ENCODE measurements at regions of chr16 and their contacts with region 1.

Region 1: GRCh38 chr16:53945996-53946395 is 242.0 kb downstream of the FTO start:
- DNase-seq: peak; percentile 64
- ATAC-seq: peak; percentile 74
- H3K4me3 ChIP-seq: no peak overlapping the region
- H3K27ac ChIP-seq: no peak overlapping the region
- H3K4me1 ChIP-seq: peaks cover 2% of the 10 kb centered on the region; the same call in 1 of the 2 replicates
- H3K27me3 ChIP-seq: no peaks in the 10 kb centered on the region
- CTCF ChIP-seq: peak; percentile 89
- POLR2A ChIP-seq: no peak
- RAD21 ChIP-seq: peak; percentile 90

Region 2: GRCh38 chr16:53549970-53550690 is 395.9 kb before region 1 on chr16:
- CTCF ChIA-PET with region 1: no interaction called
- POLR2A ChIA-PET with region 1: no interaction called
- dilution Hi-C with region 1: no loop called
- in situ Hi-C with region 1: no loop called
- intact Hi-C with region 1: loop called (anchors 5 kb)
- DNase-seq: peak; percentile 82
- ATAC-seq: peak; percentile 95
- H3K4me3 ChIP-seq: no peak overlapping the region
- H3K27ac ChIP-seq: no peak overlapping the region
- H3K4me1 ChIP-seq: no peaks in the 10 kb centered on the region; the same call in 1 of the 2 replicates
- H3K27me3 ChIP-seq: peaks cover 46% of the 10 kb centered on the region
- CTCF ChIP-seq: peak; percentile 92
- POLR2A ChIP-seq: 0 out of 2 replicates have a peak, but pooled peaks have one; percentile 33
- RAD21 ChIP-seq: peak; percentile 92

Region 3: DNA sequence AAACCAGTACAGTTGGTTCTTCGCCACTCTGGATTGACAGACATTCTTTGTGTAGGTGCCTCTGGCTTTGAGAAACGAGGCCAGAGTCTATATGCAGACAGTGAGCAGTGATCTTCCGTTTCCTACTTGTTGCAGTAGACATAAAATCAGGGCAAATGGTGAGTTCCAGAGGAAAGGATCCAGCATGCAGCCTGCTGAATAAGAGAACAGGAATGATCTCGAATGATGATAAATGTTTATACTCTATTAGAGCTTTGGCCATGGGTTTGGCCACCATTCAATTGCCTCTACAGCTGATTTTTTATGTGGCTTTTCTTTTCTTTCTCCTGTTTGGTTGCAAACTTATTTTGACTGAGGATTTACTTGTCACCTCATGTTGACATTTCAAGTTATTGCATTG is 53.8 kb after region 1 on chr16:
- CTCF ChIA-PET with region 1: no interaction called
- POLR2A ChIA-PET with region 1: no interaction called
- dilution Hi-C with region 1: no loop called
- in situ Hi-C with region 1: no loop called
- intact Hi-C with region 1: no loop called
- DNase-seq: peak; percentile 43
- ATAC-seq: peak; percentile 27; the same call in 1 of the 2 replicates
- H3K4me3 ChIP-seq: no peak overlapping the region
- H3K27ac ChIP-seq: no peak overlapping the region
- H3K4me1 ChIP-seq: peaks cover 2% of the 10 kb centered on the region; the same call in 1 of the 2 replicates
- H3K27me3 ChIP-seq: no peaks in the 10 kb centered on the region
- CTCF ChIP-seq: no peak
- POLR2A ChIP-seq: no peak
- RAD21 ChIP-seq: no peak

Region 4: DNA sequence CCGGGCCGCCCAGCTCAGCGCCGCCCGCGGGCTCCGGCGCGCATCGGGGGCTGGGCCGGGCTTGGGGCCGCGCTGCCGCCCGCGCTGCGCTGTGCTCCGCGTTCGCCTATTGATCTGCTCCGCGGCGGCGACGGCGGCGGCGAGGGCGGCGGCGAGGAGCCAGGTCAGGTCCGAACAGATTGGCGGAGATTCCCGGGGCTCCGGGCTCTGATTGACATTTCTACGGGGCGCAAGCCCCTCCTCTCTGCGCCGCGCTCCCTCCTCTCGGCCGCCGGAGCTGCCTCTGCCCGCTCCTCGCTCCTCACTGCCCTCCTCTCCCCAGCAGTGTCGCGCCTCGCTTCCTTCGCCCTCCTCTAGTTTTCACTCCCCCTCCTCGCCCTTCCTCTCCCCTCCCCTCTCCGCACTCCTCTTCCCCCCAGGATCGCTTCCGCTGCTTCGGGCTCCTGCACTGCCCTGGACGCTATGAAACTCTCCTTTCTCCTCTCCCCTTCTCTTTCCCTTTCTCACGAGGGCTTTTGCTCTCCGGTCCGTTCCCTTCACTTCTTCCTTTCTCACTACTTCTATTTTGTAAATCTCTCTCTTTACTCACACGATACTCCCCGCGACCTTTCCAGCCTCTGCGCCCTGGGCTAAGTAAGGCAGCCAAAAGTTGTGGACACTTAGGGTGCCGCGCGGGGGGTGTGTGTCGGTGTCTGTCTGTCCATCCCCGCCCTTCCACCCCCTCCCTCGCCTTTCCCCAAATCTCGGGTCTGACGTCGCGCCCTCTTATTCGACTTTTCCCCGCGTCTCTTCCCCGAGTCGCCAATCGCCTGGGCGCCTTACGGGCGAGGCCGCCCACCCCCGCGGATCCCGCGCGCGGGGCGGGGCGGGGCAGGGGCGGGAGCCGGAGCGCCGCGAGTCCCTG is 340.3 kb after region 1 on chr16 and contains the start of gene IRX3:
- CTCF ChIA-PET with region 1: no interaction called
- POLR2A ChIA-PET with region 1: no interaction called
- dilution Hi-C with region 1: no loop called
- in situ Hi-C with region 1: no loop called
- intact Hi-C with region 1: loop called (anchors 10 kb)
- DNase-seq: peak; percentile 4
- ATAC-seq: peak; percentile 58
- H3K4me3 ChIP-seq: peak within 1 kb of the TSS; percentile 71
- H3K27ac ChIP-seq: no peak within 1 kb of the TSS; the same call in 1 of the 2 replicates
- H3K4me1 ChIP-seq: peaks cover 4% of the 10 kb centered on the region; the same call in 1 of the 2 replicates
- H3K27me3 ChIP-seq: peaks cover 97% of the 10 kb centered on the region
- CTCF ChIP-seq: no peak
- POLR2A ChIP-seq: no peak
- RAD21 ChIP-seq: no peak
- total RNA-seq, gene IRX3: not detected in 2 replicates

Region 5: DNA sequence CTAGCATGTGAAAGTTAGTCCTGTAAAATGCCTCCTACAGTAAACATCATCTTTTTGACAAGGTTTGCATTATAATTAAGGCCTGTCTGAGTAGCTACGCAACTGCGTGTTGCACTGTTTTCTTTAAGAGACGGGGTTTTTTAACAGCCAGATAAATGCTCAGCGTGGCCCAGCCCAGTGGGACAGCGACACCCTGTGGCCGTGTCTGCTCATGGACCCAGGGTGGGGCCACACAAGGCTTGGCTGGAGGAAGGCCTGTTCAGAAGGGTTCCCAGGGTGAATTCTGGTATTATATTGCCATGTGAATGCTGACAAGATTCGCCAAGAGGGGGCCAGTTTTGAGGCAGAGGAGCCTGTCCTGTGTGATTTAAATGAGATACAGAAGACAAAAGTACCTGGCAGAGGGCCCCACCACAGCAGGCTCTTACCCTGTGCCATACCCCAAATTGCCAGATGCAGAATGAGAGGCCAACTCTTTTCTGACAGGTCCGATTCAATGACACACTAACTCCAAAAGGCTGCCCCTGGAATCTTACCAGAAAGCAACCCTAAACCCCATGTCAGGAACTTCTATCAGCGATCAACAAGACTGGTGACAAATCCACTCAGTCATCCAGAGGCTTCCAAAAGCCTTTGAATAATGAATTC is 1312.1 kb after region 1 on chr16:
- CTCF ChIA-PET with region 1: interaction called, 5 read pairs
- POLR2A ChIA-PET with region 1: no interaction called
- dilution Hi-C with region 1: no loop called
- in situ Hi-C with region 1: no loop called
- intact Hi-C with region 1: loop called (anchors 1 kb)
- DNase-seq: peak; percentile 26
- ATAC-seq: no peak
- H3K4me3 ChIP-seq: no peak overlapping the region
- H3K27ac ChIP-seq: no peak overlapping the region
- H3K4me1 ChIP-seq: no peaks in the 10 kb centered on the region
- H3K27me3 ChIP-seq: no peaks in the 10 kb centered on the region
- CTCF ChIP-seq: peak; percentile 58
- POLR2A ChIP-seq: no peak
- RAD21 ChIP-seq: peak; percentile 76

Region 6: DNA sequence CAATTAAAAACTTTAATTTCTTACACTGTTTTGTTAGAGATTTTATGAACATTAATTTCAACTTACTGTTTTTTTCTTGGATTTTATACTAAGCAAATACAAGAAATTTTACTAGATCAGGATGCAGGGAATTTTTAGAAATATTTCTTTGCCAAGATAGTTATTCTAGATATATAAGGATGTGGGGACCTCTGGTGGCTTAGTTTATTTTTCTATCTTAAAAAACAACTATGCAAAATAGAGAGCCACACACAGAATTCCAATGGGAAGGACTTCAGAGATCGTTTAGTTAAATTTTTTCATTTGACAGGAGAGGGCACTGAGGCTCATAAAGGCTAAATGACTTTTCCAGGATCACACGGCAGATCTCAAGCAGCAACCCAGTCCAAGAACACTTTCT is 1597.5 kb after region 1 on chr16:
- CTCF ChIA-PET with region 1: no interaction called
- POLR2A ChIA-PET with region 1: no interaction called
- dilution Hi-C with region 1: no loop called
- in situ Hi-C with region 1: no loop called
- intact Hi-C with region 1: loop called (anchors 10 kb)
- DNase-seq: peak; percentile 41
- ATAC-seq: peak; percentile 67
- H3K4me3 ChIP-seq: no peak overlapping the region
- H3K27ac ChIP-seq: no peak overlapping the region
- H3K4me1 ChIP-seq: peaks cover 6% of the 10 kb centered on the region
- H3K27me3 ChIP-seq: no peaks in the 10 kb centered on the region
- CTCF ChIP-seq: peak; percentile 59
- POLR2A ChIP-seq: no peak
- RAD21 ChIP-seq: peak; percentile 64